ENCODE measurements at regions of chr12 and their contacts with region 1.

Region 1: DNA sequence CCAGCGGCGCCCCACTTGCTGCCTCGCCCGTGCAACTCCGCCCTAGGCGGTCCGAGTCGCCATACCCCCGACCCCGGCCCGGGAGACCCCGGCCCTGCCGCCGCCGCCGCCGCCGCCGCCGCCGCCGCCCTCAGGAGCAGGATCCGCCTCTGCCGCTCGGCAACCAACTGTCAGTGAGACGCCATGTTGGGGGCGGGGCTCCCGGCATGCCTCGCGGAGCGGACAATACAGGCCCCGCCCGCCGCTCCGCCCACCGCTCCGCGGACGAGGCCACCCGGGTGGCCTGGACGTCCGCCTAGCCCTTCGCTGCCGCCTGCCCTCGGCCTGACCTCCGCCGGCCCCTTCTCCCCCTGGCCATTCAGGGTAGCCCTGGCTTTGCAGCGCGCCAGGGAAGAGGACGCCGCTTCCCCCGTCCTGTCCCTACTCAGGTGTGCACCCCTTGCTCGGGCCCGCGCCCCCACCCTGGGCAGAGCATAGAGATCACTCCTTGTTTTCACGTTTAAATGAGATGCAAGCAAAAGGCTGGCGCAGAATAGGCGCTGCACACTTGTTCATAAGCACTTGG is at the start of gene HECTD4:
- DNase-seq: peak; percentile 96

Region 2: GRCh38 chr12:112219195-112219594 is 163.1 kb before region 1 on chr12:
- in situ Hi-C with region 1: loop called (anchors 25 kb)
- DNase-seq: no peak

Region 3: GRCh38 chr12:112496496-112496895 is 114.2 kb after region 1 on chr12:
- in situ Hi-C with region 1: no loop called
- DNase-seq: no peak

Region 4: GRCh38 chr12:113184900-113185773 is 802.8 kb after region 1 on chr12 and contains the starts of genes DDX54 and RITA1:
- in situ Hi-C with region 1: no loop called
- DNase-seq: peak; percentile 96